ENCODE measurements at regions of chr4 and their contacts with region 1.

Region 1: GRCh38 chr4:25993395-25994185 is 79.6 kb downstream of the SMIM20 start:
- DNase-seq: no peak
- H3K4me3 Mint-ChIP-seq: no peak overlapping the region
- H3K27ac Mint-ChIP-seq: no peak overlapping the region
- H3K4me1 Mint-ChIP-seq: peaks cover 13% of the 10 kb centered on the region
- H3K27me3 Mint-ChIP-seq: peaks cover 2% of the 10 kb centered on the region

Region 2: DNA sequence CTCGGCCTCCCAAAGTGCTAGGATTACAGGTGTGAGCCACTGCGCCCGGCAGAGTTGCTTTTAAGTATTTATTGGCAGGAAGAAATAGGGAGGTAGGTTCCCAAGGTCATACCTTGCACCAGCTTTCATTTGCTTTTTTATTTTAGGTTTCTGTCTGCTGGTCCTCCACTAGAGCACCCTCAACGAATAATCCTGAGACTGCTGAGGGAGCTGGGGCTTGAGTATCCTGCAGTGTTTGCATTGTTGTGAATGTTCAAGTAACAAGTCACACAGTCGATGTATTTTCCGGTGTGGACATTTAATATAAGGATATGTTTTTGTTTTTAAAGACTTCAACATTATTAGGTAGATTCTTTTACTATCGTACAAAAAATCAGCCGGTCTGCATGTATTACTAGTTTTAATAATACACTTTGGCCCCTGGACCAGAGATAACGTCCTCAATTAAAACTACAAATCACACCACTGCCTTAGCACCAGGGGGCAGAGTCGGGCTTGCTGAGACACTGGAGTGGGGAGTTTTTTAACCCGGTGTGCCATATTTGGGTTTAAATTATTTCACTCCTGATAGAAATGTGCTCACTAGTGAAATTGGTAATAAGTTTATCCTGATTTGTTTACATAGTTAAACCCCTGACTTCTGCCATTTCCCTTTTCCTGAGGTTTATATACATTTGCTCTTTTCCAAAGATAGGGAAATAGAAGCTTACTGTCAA is 67.9 kb before region 1 on chr4:
- intact Hi-C with region 1: loop called (anchors 2 kb)
- DNase-seq: no peak
- H3K4me3 Mint-ChIP-seq: no peak overlapping the region
- H3K27ac Mint-ChIP-seq: no peak overlapping the region
- H3K4me1 Mint-ChIP-seq: peaks cover 6% of the 10 kb centered on the region
- H3K27me3 Mint-ChIP-seq: no peaks in the 10 kb centered on the region

Region 3: GRCh38 chr4:26009502-26009901 is 15.9 kb after region 1 on chr4:
- intact Hi-C with region 1: loop called (anchors 1 kb)
- DNase-seq: no peak
- H3K4me3 Mint-ChIP-seq: no peak overlapping the region
- H3K27ac Mint-ChIP-seq: peak overlapping the region; percentile 11
- H3K4me1 Mint-ChIP-seq: peaks cover 12% of the 10 kb centered on the region
- H3K27me3 Mint-ChIP-seq: peaks cover 10% of the 10 kb centered on the region

Region 4: DNA sequence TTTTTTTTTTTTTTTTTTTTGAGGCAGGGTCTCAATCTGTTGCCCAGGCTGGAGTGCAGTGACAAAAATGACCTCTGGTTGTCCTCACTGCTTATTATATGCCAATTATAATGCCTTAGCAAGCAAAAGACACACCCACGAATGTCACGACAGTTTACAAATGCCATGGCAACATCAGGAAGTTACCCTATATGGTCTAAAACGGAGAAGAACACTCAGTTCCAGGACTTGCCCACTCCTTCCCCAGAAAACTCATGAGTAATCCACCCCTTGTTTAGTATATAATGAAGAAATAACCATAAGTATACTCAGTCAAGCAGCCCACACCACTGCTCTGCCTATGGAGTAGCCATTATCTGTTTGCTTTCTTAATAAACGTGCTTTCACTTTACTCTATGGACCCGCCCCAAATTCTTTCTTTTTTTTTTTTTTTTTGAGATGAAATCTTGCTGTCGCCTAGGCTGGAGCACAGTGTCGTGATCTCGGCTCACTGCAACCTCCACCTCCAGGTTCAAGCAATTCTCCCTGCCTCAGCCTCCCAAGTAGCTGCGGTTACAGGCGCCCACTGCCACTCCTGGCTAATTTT is 26.6 kb after region 1 on chr4:
- intact Hi-C with region 1: loop called (anchors 2 kb)
- DNase-seq: no peak
- H3K4me3 Mint-ChIP-seq: no peak overlapping the region
- H3K27ac Mint-ChIP-seq: peak overlapping the region; percentile 18
- H3K4me1 Mint-ChIP-seq: peaks cover 21% of the 10 kb centered on the region
- H3K27me3 Mint-ChIP-seq: peaks cover 9% of the 10 kb centered on the region

Region 5: DNA sequence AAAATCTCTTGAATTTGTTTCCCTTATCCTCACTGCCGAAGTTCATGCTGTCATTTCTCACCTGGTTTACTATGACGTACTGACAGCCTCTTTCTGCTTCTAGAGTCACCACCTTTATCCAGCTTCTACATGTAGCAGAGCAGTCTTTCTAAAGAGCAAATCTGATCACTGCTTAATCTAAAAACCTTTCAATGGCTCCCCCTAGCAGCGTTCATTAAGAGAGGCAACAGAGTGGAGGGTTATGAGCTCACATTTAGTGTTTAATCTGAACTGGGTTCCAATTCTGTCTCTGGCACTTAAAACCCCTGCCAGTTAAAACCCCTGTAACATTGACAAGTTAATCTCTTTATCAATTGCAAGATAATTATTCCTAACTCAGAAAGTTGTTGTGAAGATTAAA is 331.6 kb after region 1 on chr4:
- intact Hi-C with region 1: loop called (anchors 1 kb)
- DNase-seq: peak; percentile 24
- H3K4me3 Mint-ChIP-seq: peak overlapping the region; percentile 85
- H3K27ac Mint-ChIP-seq: peak overlapping the region; percentile 80
- H3K4me1 Mint-ChIP-seq: peaks cover 47% of the 10 kb centered on the region
- H3K27me3 Mint-ChIP-seq: no peaks in the 10 kb centered on the region

Region 6: GRCh38 chr4:26410385-26411293 is 417.0 kb after region 1 on chr4:
- intact Hi-C with region 1: loop called (anchors 1 kb)
- DNase-seq: peak; percentile 19
- H3K4me3 Mint-ChIP-seq: no peak overlapping the region
- H3K27ac Mint-ChIP-seq: no peak overlapping the region
- H3K4me1 Mint-ChIP-seq: peaks cover 25% of the 10 kb centered on the region
- H3K27me3 Mint-ChIP-seq: no peaks in the 10 kb centered on the region

Region 7: DNA sequence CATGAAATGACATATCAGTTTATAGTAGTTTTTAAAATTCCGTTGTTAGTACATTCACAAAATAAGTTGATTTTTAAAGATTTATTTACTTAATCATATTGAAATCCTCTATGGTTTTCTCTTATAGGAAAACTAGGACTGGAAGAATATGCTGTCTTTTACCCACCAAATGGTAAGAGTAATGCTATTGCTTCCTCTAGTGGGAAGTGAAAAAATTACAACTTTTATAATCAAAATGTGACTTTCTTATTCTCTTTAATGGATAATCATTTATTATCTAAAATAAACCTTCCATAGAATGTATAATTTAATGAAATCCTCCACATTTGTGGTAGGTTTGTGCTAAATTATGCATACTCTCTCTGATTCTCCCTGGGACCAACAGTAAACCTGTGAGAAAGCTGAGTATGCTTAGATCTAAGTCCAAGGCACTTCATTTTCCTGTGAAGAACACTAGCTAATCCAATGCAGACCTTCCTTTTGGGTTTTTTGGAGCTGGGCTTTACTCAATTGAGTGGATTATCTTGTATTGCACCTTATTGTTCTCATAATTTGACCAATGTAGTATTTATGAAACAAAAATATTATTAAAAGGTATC is 726.5 kb after region 1 on chr4:
- intact Hi-C with region 1: loop called (anchors 1 kb)
- DNase-seq: no peak
- H3K4me3 Mint-ChIP-seq: no peak overlapping the region
- H3K27ac Mint-ChIP-seq: no peak overlapping the region
- H3K4me1 Mint-ChIP-seq: no peaks in the 10 kb centered on the region
- H3K27me3 Mint-ChIP-seq: peaks cover 2% of the 10 kb centered on the region

Measured in activated T-helper 1 cell treated with anti-CD3 and anti-CD28 coated beads, Interleukin-12 subunit alpha, Interleukin-12 subunit beta, Interleukin-2, Interleukin-4 antibody, amounts not matched to agents 30 ng/mL and 10 ng/mL and 1 ng/mL, durations not matched to agents 14 hours and 24 hours and 36 hours (primary cell).